Right ventricle myocardium superior (tissue), 1 donor: ENCODE measurements at regions of chr1 and their contacts with region 1.

Region 1: GRCh38 chr1:161749509-161750407 is at the start of gene DUSP12:
- DNase-seq: peak; percentile 96
- ATAC-seq: peak; percentile 100
- total RNA-seq, gene DUSP12: 6.9 TPM

Region 2: DNA sequence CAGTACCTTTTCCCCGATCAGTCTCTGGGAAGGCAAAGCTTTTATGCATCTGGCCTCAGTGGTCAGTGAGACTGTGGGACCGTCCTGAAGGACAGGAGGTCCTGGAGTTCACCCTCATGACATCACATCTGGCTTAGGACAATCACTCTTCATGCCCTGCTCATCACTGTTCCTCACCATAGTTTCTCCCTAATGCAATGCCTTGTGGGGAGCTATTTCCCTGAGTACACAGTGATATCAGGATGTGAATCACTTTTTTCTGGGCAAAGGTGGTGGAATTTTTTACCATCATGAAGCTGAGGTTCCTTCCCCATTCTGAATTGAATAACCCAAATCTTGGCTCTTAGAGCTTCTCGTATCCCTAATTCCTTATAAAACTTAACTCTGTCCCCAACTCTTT is 347.3 kb before region 1 on chr1:
- intact Hi-C with region 1: loop called (anchors 10 kb)
- DNase-seq: no peak
- ATAC-seq: no peak

Region 3: GRCh38 chr1:161427733-161428516 is 321.8 kb before region 1 on chr1:
- intact Hi-C with region 1: no loop called
- DNase-seq: no peak
- ATAC-seq: no peak

Region 4: GRCh38 chr1:161676958-161677689 is 72.6 kb before region 1 on chr1:
- intact Hi-C with region 1: no loop called
- DNase-seq: no peak
- ATAC-seq: no peak